IMR-90 (cell line): ENCODE measurements at regions of chr9 and their contacts with region 1.

Region 1: GRCh38 chr9:38068866-38069629 is at the start of gene SHB:
- DNase-seq: peak; percentile 33
- ATAC-seq: peak; percentile 71
- H3K4me3 ChIP-seq: peak within 1 kb of the TSS; percentile 89
- H3K27ac ChIP-seq: peak within 1 kb of the TSS; percentile 95
- H3K4me1 ChIP-seq: peaks cover 19% of the 10 kb centered on the region
- H3K27me3 ChIP-seq: no peaks in the 10 kb centered on the region
- CTCF ChIP-seq: no peak
- POLR2A ChIP-seq: peak; percentile 96
- RAD21 ChIP-seq: no peak
- total RNA-seq, gene SHB: 6.1 and 7.8 TPM in 2 replicates

Region 2: GRCh38 chr9:37876376-37876775 is 192.7 kb before region 1 on chr9:
- CTCF ChIA-PET with region 1: no interaction called
- POLR2A ChIA-PET with region 1: no interaction called
- dilution Hi-C with region 1: no loop called
- in situ Hi-C with region 1: no loop called
- intact Hi-C with region 1: no loop called
- DNase-seq: peak; percentile 59
- ATAC-seq: peak; percentile 15
- H3K4me3 ChIP-seq: no peak overlapping the region
- H3K27ac ChIP-seq: no peak overlapping the region
- H3K4me1 ChIP-seq: no peaks in the 10 kb centered on the region; the same call in 1 of the 2 replicates
- H3K27me3 ChIP-seq: no peaks in the 10 kb centered on the region
- CTCF ChIP-seq: no peak
- POLR2A ChIP-seq: no peak
- RAD21 ChIP-seq: no peak

Region 3: DNA sequence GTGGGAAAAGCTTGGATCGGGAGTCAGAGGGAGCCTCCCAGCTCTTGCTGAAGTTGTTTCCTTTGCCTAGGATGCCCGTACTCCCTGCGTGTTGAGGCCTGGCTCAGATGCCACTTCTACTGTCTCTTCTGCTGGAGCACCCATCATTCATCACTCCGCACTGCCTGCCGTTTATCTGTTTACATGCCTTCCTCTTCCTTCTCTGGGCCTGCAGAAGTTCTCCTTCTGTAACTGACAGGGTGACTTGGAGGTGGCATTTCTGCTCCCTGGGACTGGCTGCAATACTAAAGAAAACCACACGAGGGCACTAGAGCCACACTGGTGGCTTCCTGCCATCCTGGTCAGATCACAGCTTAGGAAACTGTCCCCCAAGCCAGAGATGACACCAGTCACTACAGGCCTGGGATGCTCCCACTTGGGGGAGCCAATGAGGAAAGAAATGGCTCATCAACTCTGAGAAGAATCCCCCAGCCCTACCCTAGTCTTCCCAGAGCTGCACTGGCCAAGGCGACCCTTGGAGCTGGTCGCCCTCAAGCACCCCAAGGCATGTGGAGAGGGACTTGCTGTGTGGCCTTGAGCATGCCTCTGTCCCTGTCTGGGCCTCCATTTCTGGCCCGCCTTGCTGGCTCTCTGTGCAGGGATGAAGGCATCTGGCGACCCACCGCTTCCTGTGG is 155.4 kb before region 1 on chr9:
- CTCF ChIA-PET with region 1: interaction called, 4 read pairs
- POLR2A ChIA-PET with region 1: interaction called, 12 read pairs
- dilution Hi-C with region 1: no loop called
- in situ Hi-C with region 1: no loop called
- intact Hi-C with region 1: loop called (anchors 1 kb)
- DNase-seq: peak; percentile 72
- ATAC-seq: peak; percentile 90
- H3K4me3 ChIP-seq: no peak overlapping the region
- H3K27ac ChIP-seq: no peak overlapping the region
- H3K4me1 ChIP-seq: peaks cover 17% of the 10 kb centered on the region
- H3K27me3 ChIP-seq: no peaks in the 10 kb centered on the region
- CTCF ChIP-seq: peak; percentile 98
- POLR2A ChIP-seq: peak; percentile 60
- RAD21 ChIP-seq: peak; percentile 100

Region 4: DNA sequence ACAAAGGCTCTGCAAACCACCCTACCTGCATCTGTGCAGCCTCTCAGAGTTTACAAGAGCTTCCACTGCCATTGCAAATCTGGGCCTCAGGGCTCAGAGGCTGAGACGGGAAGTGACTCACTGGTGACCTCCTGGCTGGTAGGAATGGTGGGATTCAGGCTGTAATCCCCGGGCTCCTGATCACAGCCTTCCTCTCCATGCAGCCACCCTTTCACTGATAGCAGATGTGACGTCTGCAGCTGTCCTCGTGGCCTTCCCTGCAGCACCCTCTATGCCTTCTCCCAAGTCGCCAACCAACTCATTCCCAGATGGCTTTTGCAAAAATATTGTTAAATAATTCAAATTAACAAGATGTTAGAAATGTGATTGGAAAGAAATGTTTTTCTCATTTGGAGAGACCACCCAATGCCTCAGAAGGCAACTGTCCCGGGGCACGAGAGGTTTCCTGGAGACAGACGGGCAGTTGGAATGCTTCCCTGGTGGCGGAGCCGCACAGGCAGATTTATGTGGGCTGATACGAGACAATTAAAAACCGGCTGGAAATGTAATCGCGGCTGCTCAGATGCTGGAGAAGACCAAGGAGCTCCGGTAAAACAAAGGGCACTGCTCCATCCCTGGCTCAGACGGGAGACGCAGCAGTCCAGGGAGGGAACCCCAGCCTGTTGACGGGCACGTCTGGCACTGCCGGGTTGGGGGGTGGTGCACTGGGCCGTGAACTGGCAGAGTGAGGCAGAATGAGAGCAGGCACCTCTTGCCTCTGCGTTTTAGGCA is 130.7 kb before region 1 on chr9:
- CTCF ChIA-PET with region 1: interaction called, 4 read pairs
- POLR2A ChIA-PET with region 1: no interaction called
- dilution Hi-C with region 1: loop called (anchors 25 kb)
- in situ Hi-C with region 1: no loop called
- intact Hi-C with region 1: no loop called
- DNase-seq: peak; percentile 93
- ATAC-seq: peak; percentile 69
- H3K4me3 ChIP-seq: no peak overlapping the region
- H3K27ac ChIP-seq: peak overlapping the region; percentile 92
- H3K4me1 ChIP-seq: peaks cover 40% of the 10 kb centered on the region
- H3K27me3 ChIP-seq: no peaks in the 10 kb centered on the region
- CTCF ChIP-seq: no peak
- POLR2A ChIP-seq: peak; percentile 19; the same call in 1 of the 2 replicates
- RAD21 ChIP-seq: 0 out of 2 replicates have a peak, but pooled peaks have one; percentile 5

Region 5: GRCh38 chr9:38008168-38009034 is 60.6 kb before region 1 on chr9:
- CTCF ChIA-PET with region 1: interaction called, 4 read pairs
- POLR2A ChIA-PET with region 1: no interaction called
- dilution Hi-C with region 1: no loop called
- in situ Hi-C with region 1: no loop called
- intact Hi-C with region 1: loop called (anchors 2 kb)
- DNase-seq: peak; percentile 93
- ATAC-seq: peak; percentile 80
- H3K4me3 ChIP-seq: no peak overlapping the region
- H3K27ac ChIP-seq: peak overlapping the region; percentile 85
- H3K4me1 ChIP-seq: peaks cover 40% of the 10 kb centered on the region
- H3K27me3 ChIP-seq: no peaks in the 10 kb centered on the region
- CTCF ChIP-seq: no peak
- POLR2A ChIP-seq: no peak
- RAD21 ChIP-seq: peak; percentile 27

Region 6: DNA sequence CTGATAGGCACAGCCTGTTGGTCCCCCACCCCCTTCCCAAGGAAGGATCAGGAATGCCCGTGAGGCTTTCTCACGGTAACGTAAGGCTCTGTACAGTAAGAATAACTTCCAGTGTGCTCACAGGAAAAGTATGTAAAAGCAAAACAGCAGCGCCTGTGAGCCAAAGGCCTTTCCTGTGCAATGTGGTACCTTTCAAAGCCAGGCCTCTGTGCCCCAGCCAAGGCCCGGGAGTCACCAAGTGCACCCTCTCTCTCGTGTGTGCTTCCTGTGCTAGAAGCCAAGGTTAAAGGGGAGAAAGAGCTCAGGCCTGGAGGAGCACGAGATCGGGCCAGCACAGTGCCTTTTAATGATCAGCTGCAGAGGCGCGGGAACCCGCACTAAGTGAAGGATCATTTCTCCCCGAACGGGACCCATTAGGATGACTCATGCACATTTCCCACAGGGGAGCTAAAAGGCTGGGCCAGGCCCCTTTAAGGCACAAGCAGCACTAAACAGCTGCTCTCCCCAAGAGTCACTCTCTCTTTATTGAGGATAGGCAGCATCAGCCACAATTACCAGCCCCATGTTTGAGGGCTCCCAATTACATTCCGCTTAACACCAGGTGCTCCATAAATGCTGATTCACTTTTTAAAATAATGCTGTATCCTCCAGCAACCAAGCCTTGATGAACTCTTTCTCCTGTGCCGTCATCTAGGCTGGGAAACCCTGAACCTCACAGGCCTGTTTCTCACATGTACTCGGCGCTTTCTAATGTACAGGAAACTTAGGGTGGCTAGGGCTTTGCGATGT is 42.8 kb before region 1 on chr9:
- CTCF ChIA-PET with region 1: no interaction called
- POLR2A ChIA-PET with region 1: no interaction called
- dilution Hi-C with region 1: no loop called
- in situ Hi-C with region 1: loop called (anchors 5 kb)
- intact Hi-C with region 1: loop called (anchors 2 kb)
- DNase-seq: peak; percentile 98
- ATAC-seq: peak; percentile 77
- H3K4me3 ChIP-seq: no peak overlapping the region
- H3K27ac ChIP-seq: peak overlapping the region; percentile 96
- H3K4me1 ChIP-seq: peaks cover 59% of the 10 kb centered on the region
- H3K27me3 ChIP-seq: no peaks in the 10 kb centered on the region
- CTCF ChIP-seq: no peak
- POLR2A ChIP-seq: no peak; the same call in 1 of the 2 replicates
- RAD21 ChIP-seq: peak; percentile 28

Region 7: GRCh38 chr9:38294220-38294960 is 225.3 kb after region 1 on chr9:
- CTCF ChIA-PET with region 1: no interaction called
- POLR2A ChIA-PET with region 1: no interaction called
- dilution Hi-C with region 1: no loop called
- in situ Hi-C with region 1: no loop called
- intact Hi-C with region 1: no loop called
- DNase-seq: no peak
- ATAC-seq: no peak
- H3K4me3 ChIP-seq: no peak overlapping the region
- H3K27ac ChIP-seq: no peak overlapping the region
- H3K4me1 ChIP-seq: no peaks in the 10 kb centered on the region
- H3K27me3 ChIP-seq: peaks cover 39% of the 10 kb centered on the region
- CTCF ChIP-seq: no peak
- POLR2A ChIP-seq: no peak
- RAD21 ChIP-seq: no peak